ENCODE measurements at regions of chr15 and their contacts with region 1.

Region 1: DNA sequence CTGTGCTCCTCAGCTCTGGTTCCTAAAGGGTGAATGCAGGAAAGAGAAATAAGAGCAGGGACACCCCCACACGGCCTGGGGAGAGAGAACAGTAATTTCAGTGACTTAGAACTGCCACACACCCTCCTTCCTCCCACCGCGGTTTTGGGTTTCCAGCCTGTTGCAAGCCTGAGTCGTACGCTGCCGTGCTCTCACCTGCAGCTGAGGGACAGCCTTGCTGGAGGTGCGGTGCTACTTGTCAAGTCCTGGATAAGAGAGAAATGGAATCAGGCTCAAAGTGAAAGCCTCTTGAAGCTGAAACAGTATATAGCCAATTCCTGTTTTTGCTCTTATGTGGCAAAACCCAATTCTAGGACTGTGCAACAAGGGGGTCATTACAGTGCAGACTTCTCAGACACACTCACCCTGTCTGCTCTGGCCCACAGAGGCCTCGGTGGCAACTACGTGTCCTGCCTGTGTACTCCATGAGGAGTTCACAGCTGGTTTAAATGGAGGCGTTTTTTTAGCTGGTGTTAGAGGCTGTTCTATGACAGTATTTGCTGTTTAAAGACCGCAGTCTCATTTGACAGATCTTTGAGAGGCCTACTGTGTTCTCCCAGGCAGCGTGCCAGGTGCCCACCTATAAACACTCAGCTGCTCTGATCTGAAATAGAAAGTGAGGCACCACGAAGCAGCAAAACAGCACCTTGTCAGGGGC is 42.9 kb downstream of the TBC1D2B start:
- DNase-seq: peak; percentile 56
- CTCF ChIP-seq: no peak

Region 2: GRCh38 chr15:77688693-77689092 is 345.9 kb before region 1 on chr15:
- CTCF ChIA-PET with region 1: no interaction called
- POLR2A ChIA-PET with region 1: no interaction called
- DNase-seq: no peak
- CTCF ChIP-seq: no peak

Region 3: GRCh38 chr15:78061963-78062435 is 27.4 kb after region 1 on chr15:
- CTCF ChIA-PET with region 1: interaction called, 18 read pairs
- POLR2A ChIA-PET with region 1: no interaction called
- DNase-seq: peak; percentile 57
- CTCF ChIP-seq: no peak